ENCODE measurements at regions of chr13 and their contacts with region 1.

Region 1: GRCh38 chr13:40682449-40683240 is 16.2 kb upstream of the FOXO1 start:
- DNase-seq: peak; percentile 86
- H3K4me3 ChIP-seq: peak overlapping the region; percentile 11
- H3K27ac ChIP-seq: peak overlapping the region; percentile 41
- H3K4me1 ChIP-seq: peaks cover 39% of the 10 kb centered on the region
- CTCF ChIP-seq: peak; percentile 88

Region 2: GRCh38 chr13:39684531-39685137 is 998.0 kb before region 1 on chr13:
- CTCF ChIA-PET with region 1: no interaction called
- POLR2A ChIA-PET with region 1: interaction called, 3 read pairs
- intact Hi-C with region 1: loop called (anchors 2 kb)
- DNase-seq: peak; percentile 81
- H3K4me3 ChIP-seq: no peak overlapping the region
- H3K27ac ChIP-seq: no peak overlapping the region
- H3K4me1 ChIP-seq: peaks cover 13% of the 10 kb centered on the region
- CTCF ChIP-seq: peak; percentile 80

Region 3: GRCh38 chr13:39777527-39778061 is 905.1 kb before region 1 on chr13:
- CTCF ChIA-PET with region 1: no interaction called
- POLR2A ChIA-PET with region 1: no interaction called
- intact Hi-C with region 1: loop called (anchors 5 kb)
- DNase-seq: peak; percentile 57
- H3K4me3 ChIP-seq: no peak overlapping the region
- H3K27ac ChIP-seq: no peak overlapping the region
- H3K4me1 ChIP-seq: no peaks in the 10 kb centered on the region
- CTCF ChIP-seq: peak; percentile 80

Region 4: DNA sequence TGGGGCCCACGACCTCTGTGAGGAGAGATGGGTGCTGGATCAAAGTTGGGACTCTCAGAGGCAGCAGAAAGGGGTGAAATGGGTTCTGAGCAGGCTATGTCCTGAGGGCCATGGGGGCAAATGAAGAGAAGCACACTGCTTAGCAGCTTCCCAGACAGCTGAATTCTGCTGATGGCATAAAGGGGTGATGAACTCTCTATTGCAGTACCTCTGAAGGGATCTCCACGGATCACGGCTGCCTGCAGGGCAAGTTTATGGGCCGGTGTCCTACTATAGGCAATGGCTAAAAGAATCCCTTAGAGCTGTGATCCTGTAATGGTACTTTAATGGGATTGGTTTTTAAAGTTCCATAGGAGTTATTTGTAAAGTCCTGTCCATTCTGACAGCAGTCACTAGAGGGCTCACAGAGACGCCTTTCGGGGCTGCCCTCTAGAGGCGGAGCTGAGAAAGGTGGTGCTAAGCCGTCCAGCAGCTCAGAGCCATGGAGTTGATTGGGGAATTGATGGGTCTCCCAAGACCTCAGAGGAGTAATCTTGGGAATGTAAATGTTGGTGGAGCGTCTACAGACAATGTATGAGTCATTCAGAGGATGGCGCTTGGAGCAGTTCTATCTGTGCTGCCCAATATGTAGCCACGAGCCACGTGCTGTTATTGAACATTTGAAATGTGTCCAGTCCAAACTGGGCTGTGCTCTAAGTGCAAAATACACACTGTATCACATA is 739.9 kb before region 1 on chr13:
- CTCF ChIA-PET with region 1: interaction called, 4 read pairs
- POLR2A ChIA-PET with region 1: interaction called, 3 read pairs
- intact Hi-C with region 1: loop called (anchors 1 kb)
- DNase-seq: peak; percentile 86
- H3K4me3 ChIP-seq: no peak overlapping the region
- H3K27ac ChIP-seq: no peak overlapping the region
- H3K4me1 ChIP-seq: peaks cover 4% of the 10 kb centered on the region
- CTCF ChIP-seq: peak; percentile 100

Region 5: DNA sequence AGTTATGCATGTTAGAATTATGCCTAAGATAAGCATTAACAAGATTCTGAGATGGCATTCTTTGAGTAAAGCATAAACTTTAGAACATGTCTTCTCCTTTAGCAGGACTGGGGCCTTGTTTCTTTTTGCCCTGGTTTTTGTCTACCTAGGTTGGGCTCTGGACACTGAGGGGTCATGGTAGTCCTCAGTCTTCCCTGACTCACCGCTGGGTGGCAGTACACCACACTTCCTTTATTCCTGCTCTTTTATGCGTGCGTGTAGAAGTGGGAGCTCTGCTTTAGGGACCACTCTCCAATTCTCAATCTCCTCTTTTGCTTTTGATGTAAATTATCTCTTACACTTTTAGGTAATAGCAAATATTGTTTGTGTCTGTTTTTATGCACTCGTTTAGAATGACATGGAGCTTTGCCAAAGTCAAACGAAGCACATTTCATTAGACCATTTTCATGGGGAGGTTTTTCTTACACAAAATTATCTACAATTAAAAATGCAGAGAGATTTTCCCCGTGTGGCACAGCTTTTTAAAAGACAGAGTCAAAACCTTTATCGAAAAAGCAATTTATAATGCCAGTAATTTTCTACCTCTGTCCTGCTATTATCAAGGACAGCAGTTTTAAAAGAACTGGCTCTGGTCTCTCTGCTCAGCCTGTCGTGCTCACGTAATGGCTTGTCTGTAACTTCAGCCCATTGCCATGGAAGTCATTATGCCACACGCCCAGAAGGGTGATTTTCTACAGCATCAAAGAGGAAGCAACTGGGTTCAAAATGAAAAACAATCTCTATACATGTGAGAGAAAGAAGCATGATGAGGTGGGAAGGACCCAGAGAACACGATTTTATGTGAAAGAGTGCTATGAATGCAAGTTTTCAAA is 613.2 kb before region 1 on chr13:
- CTCF ChIA-PET with region 1: no interaction called
- POLR2A ChIA-PET with region 1: interaction called, 5 read pairs
- intact Hi-C with region 1: loop called (anchors 1 kb)
- DNase-seq: peak; percentile 81
- H3K4me3 ChIP-seq: no peak overlapping the region
- H3K27ac ChIP-seq: no peak overlapping the region
- H3K4me1 ChIP-seq: peaks cover 24% of the 10 kb centered on the region
- CTCF ChIP-seq: peak; percentile 98

Region 6: DNA sequence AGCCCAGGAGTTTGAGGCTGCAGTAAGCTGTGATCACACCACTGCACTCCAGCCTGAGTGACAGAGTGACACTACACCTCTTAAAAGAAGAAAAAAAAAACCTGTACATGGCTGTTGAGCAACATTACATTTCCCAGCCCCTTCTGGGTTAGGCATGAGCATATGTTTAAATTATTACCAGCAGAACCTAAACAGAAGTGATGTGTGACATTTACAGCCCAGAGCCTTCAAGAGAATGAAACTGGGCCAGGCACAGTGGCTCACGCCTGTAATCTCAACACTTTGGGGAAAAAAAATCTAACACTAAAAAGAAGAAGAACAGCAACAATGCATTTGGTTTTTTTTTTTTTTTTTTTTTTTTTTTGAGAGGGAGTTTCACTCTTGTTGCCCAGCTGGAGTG is 50.0 kb after region 1 on chr13:
- CTCF ChIA-PET with region 1: no interaction called
- POLR2A ChIA-PET with region 1: no interaction called
- intact Hi-C with region 1: no loop called
- DNase-seq: no peak
- H3K4me3 ChIP-seq: no peak overlapping the region
- H3K27ac ChIP-seq: no peak overlapping the region
- H3K4me1 ChIP-seq: no peaks in the 10 kb centered on the region
- CTCF ChIP-seq: no peak

Region 7: DNA sequence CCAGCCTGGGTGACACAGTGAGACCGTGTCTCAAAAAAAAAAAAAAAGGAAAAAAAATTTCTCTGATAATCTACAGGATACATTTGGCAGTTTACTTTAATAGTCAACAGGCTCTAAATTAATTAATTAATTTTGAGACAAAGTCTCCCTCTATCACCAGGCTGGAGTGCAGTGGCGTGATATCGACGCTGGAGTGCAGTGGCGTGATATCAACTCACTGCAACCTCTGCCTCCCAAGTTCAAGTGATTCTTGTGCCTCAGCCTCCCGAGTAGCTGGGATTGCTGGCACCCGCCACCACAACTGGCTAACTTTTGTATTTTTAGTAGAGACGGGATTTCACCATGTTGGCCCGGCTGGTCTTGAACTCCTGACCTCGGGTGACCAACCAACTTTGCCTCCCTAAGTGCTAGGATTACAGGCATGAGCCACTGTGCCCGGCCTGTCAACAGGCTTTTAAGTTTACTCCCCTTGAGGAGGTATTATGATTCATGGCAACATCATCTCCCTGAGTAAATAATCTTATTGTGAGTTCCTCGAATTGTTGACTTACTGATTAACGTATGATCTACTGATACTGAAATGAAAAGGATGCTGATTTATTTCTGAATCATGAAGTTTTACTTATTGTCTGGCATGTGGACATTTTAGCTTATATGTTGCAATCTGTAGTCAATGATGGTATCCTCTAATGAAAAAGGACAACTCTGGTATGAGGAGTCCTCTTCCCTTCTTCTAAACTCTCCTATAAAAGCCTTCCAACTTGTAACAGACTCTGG is 602.1 kb after region 1 on chr13:
- CTCF ChIA-PET with region 1: no interaction called
- POLR2A ChIA-PET with region 1: no interaction called
- intact Hi-C with region 1: no loop called
- DNase-seq: no peak
- H3K4me3 ChIP-seq: no peak overlapping the region
- H3K27ac ChIP-seq: no peak overlapping the region
- H3K4me1 ChIP-seq: peaks cover 5% of the 10 kb centered on the region
- CTCF ChIP-seq: no peak